ENCODE measurements at regions of chr12 and their contacts with region 1.

Region 1: GRCh38 chr12:41277116-41277945 is 89.2 kb downstream of the PDZRN4 start:
- DNase-seq: peak; percentile 36
- CTCF ChIP-seq: peak; percentile 58

Region 2: GRCh38 chr12:41112910-41113309 is 164.4 kb before region 1 on chr12:
- in situ Hi-C with region 1: no loop called
- DNase-seq: no peak
- CTCF ChIP-seq: no peak

Region 3: GRCh38 chr12:42023733-42024494 is 746.6 kb after region 1 on chr12:
- in situ Hi-C with region 1: loop called (anchors 25 kb)
- DNase-seq: peak; percentile 61
- CTCF ChIP-seq: peak; percentile 95

Measured in GM13977 (cell line).